B cell (primary cell): ENCODE measurements at regions of chr7 and their contacts with region 1.

Region 1: GRCh38 chr7:5231811-5232484 is 41.9 kb downstream of the WIPI2 start:
- DNase-seq: peak; percentile 88
- ATAC-seq: peak; percentile 67
- H3K4me3 ChIP-seq: peak overlapping the region in 4 of 5 experiments; percentile 24 to 46 (median 38)
- H3K4me3 Mint-ChIP-seq: peak overlapping the region; percentile 82
- H3K27ac ChIP-seq: peak overlapping the region; percentile 96 to 97
- H3K27ac Mint-ChIP-seq: peak overlapping the region; percentile 91
- H3K4me1 ChIP-seq: peaks cover 71 to 75% of the 10 kb centered on the region in 2 donors
- H3K4me1 Mint-ChIP-seq: peaks cover 71% of the 10 kb centered on the region
- H3K27me3 ChIP-seq: peaks cover 0 to 2% (median 0%) of the 10 kb centered on the region in 4 experiments
- H3K27me3 Mint-ChIP-seq: no peaks in the 10 kb centered on the region
- CTCF ChIP-seq: no peak

Region 2: GRCh38 chr7:5139998-5140397 is 92.0 kb before region 1 on chr7:
- CTCF ChIA-PET with region 1: interaction called, 3 read pairs
- POLR2A ChIA-PET with region 1: no interaction called
- intact Hi-C with region 1: loop called (anchors 5 kb)
- DNase-seq: peak; percentile 45
- ATAC-seq: no peak
- H3K4me3 ChIP-seq: no peak overlapping the region
- H3K4me3 Mint-ChIP-seq: no peak overlapping the region
- H3K27ac ChIP-seq: no peak overlapping the region
- H3K27ac Mint-ChIP-seq: no peak overlapping the region
- H3K4me1 ChIP-seq: peaks cover 5 to 13% of the 10 kb centered on the region in 2 donors
- H3K4me1 Mint-ChIP-seq: peaks cover 15% of the 10 kb centered on the region
- H3K27me3 ChIP-seq: no peaks in the 10 kb centered on the region
- H3K27me3 Mint-ChIP-seq: peaks cover 3% of the 10 kb centered on the region
- CTCF ChIP-seq: no peak

Region 3: DNA sequence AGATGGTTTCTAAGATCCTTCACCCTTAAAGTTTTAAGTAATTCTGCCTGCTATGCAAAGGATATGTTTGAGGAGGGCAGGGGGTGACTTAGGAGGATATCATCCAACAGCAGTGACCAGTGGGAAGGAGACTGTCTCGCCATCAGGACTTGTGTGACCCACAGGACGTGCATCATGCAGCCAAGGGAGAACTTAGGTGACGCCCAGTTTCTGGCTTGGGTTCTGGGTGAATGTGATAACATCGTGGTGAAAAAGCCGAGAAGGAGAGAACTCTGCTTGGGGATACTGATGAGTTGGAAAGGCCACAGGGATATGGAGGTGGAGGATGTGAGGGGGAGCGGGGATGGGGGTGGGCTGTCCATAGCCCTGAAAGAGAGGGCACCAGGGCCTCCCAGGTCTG is 38.1 kb before region 1 on chr7:
- CTCF ChIA-PET with region 1: no interaction called
- POLR2A ChIA-PET with region 1: interaction called, 3 read pairs
- intact Hi-C with region 1: loop called (anchors 2 kb)
- DNase-seq: no peak
- ATAC-seq: no peak
- H3K4me3 ChIP-seq: no peak overlapping the region
- H3K4me3 Mint-ChIP-seq: no peak overlapping the region
- H3K27ac ChIP-seq: no peak overlapping the region
- H3K27ac Mint-ChIP-seq: no peak overlapping the region
- H3K4me1 ChIP-seq: peaks cover 18 to 22% of the 10 kb centered on the region in 2 donors
- H3K4me1 Mint-ChIP-seq: peaks cover 21% of the 10 kb centered on the region
- H3K27me3 ChIP-seq: no peaks in the 10 kb centered on the region
- H3K27me3 Mint-ChIP-seq: no peaks in the 10 kb centered on the region
- CTCF ChIP-seq: no peak

Region 4: DNA sequence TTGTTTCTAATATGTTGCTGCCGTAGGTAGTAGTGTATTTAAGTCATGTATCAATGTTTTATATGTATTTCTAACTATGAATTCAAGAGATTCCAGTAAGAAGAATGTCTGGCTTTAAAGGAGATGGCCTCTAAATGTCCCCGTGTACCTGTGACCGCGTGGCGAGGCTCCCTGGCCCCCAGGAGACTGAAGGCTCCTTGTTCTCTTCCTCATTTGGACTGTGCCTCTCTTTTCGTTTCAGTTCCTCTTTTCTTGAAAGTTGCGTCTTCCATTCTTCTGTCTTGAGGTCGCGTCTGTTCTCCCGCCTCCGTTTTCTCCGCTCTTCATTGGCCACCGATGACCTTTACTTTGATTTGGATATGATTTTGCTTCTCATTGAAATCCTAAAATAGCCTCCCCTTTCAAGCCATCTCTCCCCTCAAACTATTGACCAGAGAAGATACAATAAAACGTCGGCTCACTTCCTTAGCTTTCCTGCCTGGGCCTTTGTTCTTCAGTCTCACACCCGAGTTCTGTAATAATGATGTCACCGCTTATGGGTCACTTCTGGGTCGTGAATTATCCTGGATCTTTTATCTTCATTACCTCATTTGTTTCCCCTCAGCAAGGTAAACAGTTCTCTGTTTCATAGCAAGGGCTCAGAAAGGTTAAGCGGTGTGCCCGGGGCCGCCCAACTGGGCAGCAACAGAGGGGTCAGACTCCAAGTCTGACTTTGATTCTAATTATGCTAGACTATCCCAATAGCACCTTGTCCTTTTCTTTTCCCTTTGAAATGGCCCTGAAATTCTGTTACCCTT is 13.2 kb before region 1 on chr7:
- CTCF ChIA-PET with region 1: interaction called, 12 read pairs
- POLR2A ChIA-PET with region 1: interaction called, 57 read pairs
- intact Hi-C with region 1: loop called (anchors 1 kb)
- DNase-seq: peak; percentile 92
- ATAC-seq: peak; percentile 92
- H3K4me3 ChIP-seq: peak overlapping the region in 2 of 5 experiments; percentile 3 to 20
- H3K4me3 Mint-ChIP-seq: peak overlapping the region; percentile 76
- H3K27ac ChIP-seq: peak overlapping the region; percentile 80 to 89
- H3K27ac Mint-ChIP-seq: peak overlapping the region; percentile 89
- H3K4me1 ChIP-seq: peaks cover 25 to 33% of the 10 kb centered on the region in 2 donors
- H3K4me1 Mint-ChIP-seq: peaks cover 30% of the 10 kb centered on the region
- H3K27me3 ChIP-seq: no peaks in the 10 kb centered on the region
- H3K27me3 Mint-ChIP-seq: no peaks in the 10 kb centered on the region
- CTCF ChIP-seq: no peak

Region 5: GRCh38 chr7:5423844-5424688 is 192.1 kb after region 1 on chr7:
- CTCF ChIA-PET with region 1: interaction called, 4 read pairs
- POLR2A ChIA-PET with region 1: interaction called, 3 read pairs
- intact Hi-C with region 1: loop called (anchors 5 kb)
- DNase-seq: peak; percentile 82
- ATAC-seq: peak; percentile 59
- H3K4me3 ChIP-seq: peak overlapping the region; percentile 21 to 70 (median 52)
- H3K4me3 Mint-ChIP-seq: peak overlapping the region; percentile 84
- H3K27ac ChIP-seq: no peak overlapping the region
- H3K27ac Mint-ChIP-seq: peak overlapping the region; percentile 69
- H3K4me1 ChIP-seq: peaks cover 92 to 94% of the 10 kb centered on the region in 2 donors
- H3K4me1 Mint-ChIP-seq: peaks cover 56% of the 10 kb centered on the region
- H3K27me3 ChIP-seq: peaks cover 0 to 93% (median 64%) of the 10 kb centered on the region in 4 experiments
- H3K27me3 Mint-ChIP-seq: peaks cover 29% of the 10 kb centered on the region
- CTCF ChIP-seq: no peak

Region 6: DNA sequence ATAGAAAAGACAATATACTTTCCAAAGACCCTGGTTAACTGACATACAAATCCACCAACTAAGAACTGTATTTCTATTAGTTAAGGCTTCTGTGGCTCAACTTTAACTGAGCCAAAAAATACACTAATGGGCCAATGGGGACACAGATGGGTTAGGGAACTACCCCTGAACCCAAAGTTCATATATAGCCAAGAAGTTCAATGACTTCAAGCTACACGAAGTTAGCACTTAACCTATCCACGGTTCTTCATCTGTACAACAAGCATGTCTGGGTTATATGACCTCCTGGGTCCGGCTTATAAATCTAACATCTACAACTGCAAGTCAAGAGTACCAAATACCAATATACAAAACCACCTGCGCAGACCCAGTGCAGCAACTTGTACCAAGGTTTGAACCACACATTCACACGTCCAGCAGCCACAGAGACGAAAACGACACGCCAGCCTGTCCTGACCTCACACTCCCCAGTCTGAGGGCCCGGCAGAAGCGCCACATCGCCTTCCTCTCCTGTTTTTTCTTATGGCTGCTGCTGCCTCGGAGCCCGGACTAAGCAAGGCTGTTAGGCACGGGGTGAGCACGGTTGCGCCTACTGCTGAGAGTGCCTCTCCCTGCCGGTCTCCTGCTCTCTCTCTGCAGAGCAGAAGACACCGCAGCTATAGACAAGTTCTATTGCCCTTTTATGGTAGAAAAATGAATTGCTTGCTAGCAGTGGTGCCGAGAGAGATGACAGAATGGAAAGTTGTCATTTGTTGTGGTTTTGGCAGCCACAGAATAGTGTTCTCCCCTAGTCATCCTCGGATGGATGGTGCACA is 463.2 kb after region 1 on chr7:
- CTCF ChIA-PET with region 1: no interaction called
- POLR2A ChIA-PET with region 1: no interaction called
- intact Hi-C with region 1: loop called (anchors 2 kb)
- DNase-seq: peak; percentile 58
- ATAC-seq: peak; percentile 44
- H3K4me3 ChIP-seq: peak overlapping the region; percentile 39 to 56 (median 49)
- H3K4me3 Mint-ChIP-seq: peak overlapping the region; percentile 88
- H3K27ac ChIP-seq: peak overlapping the region; percentile 93 to 94
- H3K27ac Mint-ChIP-seq: peak overlapping the region; percentile 93
- H3K4me1 ChIP-seq: peaks cover 83 to 96% of the 10 kb centered on the region in 2 donors
- H3K4me1 Mint-ChIP-seq: peaks cover 94% of the 10 kb centered on the region
- H3K27me3 ChIP-seq: no peaks in the 10 kb centered on the region
- H3K27me3 Mint-ChIP-seq: no peaks in the 10 kb centered on the region
- CTCF ChIP-seq: no peak